ENCODE measurements at regions of chr17 and their contacts with region 1.

Region 1: GRCh38 chr17:33990943-33991706 is 264.0 kb upstream of the CCL2 start:
- DNase-seq: no peak
- ATAC-seq: no peak
- H3K4me3 ChIP-seq: no peak overlapping the region
- H3K27ac ChIP-seq: no peak overlapping the region
- H3K4me1 ChIP-seq: no peaks in the 10 kb centered on the region
- H3K27me3 ChIP-seq: no peaks in the 10 kb centered on the region
- CTCF ChIP-seq: no peak
- POLR2A ChIP-seq: no peak
- RAD21 ChIP-seq: no peak

Region 2: GRCh38 chr17:33964344-33964979 is 26.7 kb before region 1 on chr17:
- CTCF ChIA-PET with region 1: no interaction called
- POLR2A ChIA-PET with region 1: no interaction called
- RAD21 ChIA-PET with region 1: no interaction called
- intact Hi-C with region 1: no loop called
- DNase-seq: no peak
- ATAC-seq: no peak
- H3K4me3 ChIP-seq: no peak overlapping the region
- H3K27ac ChIP-seq: no peak overlapping the region
- H3K4me1 ChIP-seq: no peaks in the 10 kb centered on the region
- H3K27me3 ChIP-seq: no peaks in the 10 kb centered on the region
- CTCF ChIP-seq: no peak
- POLR2A ChIP-seq: no peak
- RAD21 ChIP-seq: no peak

Region 3: DNA sequence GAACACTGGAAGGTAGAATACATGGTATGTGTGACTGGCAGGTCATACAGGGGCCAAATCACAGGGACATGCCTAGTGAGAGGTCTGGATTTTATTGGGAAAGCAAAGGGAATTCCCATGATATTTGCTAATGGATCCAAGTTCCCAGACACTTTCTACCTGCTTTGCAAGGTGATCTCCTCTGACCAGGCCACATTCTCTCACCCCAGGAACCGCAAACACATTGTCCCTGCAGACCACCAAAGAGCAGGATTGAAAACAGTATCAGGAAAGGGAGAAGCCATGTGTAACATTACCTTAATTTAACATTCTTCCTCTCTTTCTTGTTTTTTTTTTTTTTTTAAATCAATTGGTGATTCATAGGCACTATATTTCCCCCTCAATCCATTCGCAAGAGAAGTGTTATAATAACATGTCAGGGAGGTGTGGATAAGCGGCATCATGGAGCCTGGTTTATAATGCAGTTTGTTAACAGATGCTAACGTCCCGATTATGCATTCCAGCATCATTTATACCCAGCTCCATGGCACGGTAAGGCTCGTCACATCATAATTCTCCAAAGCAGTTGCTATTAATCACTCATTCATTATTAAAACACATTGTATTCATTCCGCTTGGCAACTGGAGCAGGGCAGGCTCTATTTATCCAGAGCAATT is 108.9 kb after region 1 on chr17:
- CTCF ChIA-PET with region 1: no interaction called
- POLR2A ChIA-PET with region 1: no interaction called
- RAD21 ChIA-PET with region 1: no interaction called
- intact Hi-C with region 1: loop called (anchors 10 kb)
- DNase-seq: no peak
- ATAC-seq: no peak
- H3K4me3 ChIP-seq: no peak overlapping the region
- H3K27ac ChIP-seq: no peak overlapping the region
- H3K4me1 ChIP-seq: no peaks in the 10 kb centered on the region
- H3K27me3 ChIP-seq: no peaks in the 10 kb centered on the region
- CTCF ChIP-seq: no peak
- POLR2A ChIP-seq: no peak
- RAD21 ChIP-seq: no peak

Region 4: GRCh38 chr17:35022536-35023063 is 1031.5 kb after region 1 on chr17:
- CTCF ChIA-PET with region 1: no interaction called
- POLR2A ChIA-PET with region 1: no interaction called
- RAD21 ChIA-PET with region 1: no interaction called
- intact Hi-C with region 1: no loop called
- DNase-seq: no peak
- ATAC-seq: no peak
- H3K4me3 ChIP-seq: no peak overlapping the region
- H3K27ac ChIP-seq: no peak overlapping the region
- H3K4me1 ChIP-seq: no peaks in the 10 kb centered on the region
- H3K27me3 ChIP-seq: no peaks in the 10 kb centered on the region
- CTCF ChIP-seq: no peak
- POLR2A ChIP-seq: no peak
- RAD21 ChIP-seq: no peak

Measured in HCT116 (cell line).